ENCODE measurements at regions of chr20 and their contacts with region 1.

Region 1: GRCh38 chr20:34955232-34956040 is at the starts of genes GSS and MYH7B:
- DNase-seq: peak; percentile 96 to 98
- ATAC-seq: peak; percentile 96 to 97 (median 96)
- H3K4me3 ChIP-seq: peak within 1 kb of the TSS; percentile 68
- H3K4me3 Mint-ChIP-seq: peak within 1 kb of the TSS; percentile 100
- H3K27ac ChIP-seq: peak within 1 kb of the TSS; percentile 65
- H3K27ac Mint-ChIP-seq: peak within 1 kb of the TSS; percentile 94 to 98
- H3K4me1 ChIP-seq: peaks cover 12% of the 10 kb centered on the region
- H3K4me1 Mint-ChIP-seq: peaks cover 21 to 23% of the 10 kb centered on the region in 2 donors
- H3K27me3 ChIP-seq: no peaks in the 10 kb centered on the region
- H3K27me3 Mint-ChIP-seq: no peaks in the 10 kb centered on the region
- CTCF ChIP-seq: no peak
- total RNA-seq, gene GSS: 27.4 to 35.4 (median 30.3) TPM
- total RNA-seq, gene MYH7B: 0.18 to 1.0 (median 0.21) TPM

Region 2: GRCh38 chr20:34834459-34834893 is 121.0 kb before region 1 on chr20:
- intact Hi-C with region 1: loop called (anchors 1 kb)
- DNase-seq: peak in 1 of 2 donors; percentile 63
- ATAC-seq: peak in 1 of 3 donors; percentile 63
- H3K4me3 ChIP-seq: no peak overlapping the region
- H3K4me3 Mint-ChIP-seq: no peak overlapping the region
- H3K27ac ChIP-seq: no peak overlapping the region
- H3K27ac Mint-ChIP-seq: no peak overlapping the region
- H3K4me1 ChIP-seq: no peaks in the 10 kb centered on the region
- H3K4me1 Mint-ChIP-seq: peaks cover 0 to 6% of the 10 kb centered on the region in 2 donors
- H3K27me3 ChIP-seq: no peaks in the 10 kb centered on the region
- H3K27me3 Mint-ChIP-seq: peaks cover 21 to 25% of the 10 kb centered on the region in 2 donors
- CTCF ChIP-seq: peak; percentile 65

Region 3: GRCh38 chr20:34876162-34877001 is 79.1 kb before region 1 on chr20 and contains the start of gene ACSS2:
- intact Hi-C with region 1: loop called (anchors 1 kb)
- DNase-seq: peak; percentile 86 to 92
- ATAC-seq: peak; percentile 85 to 92 (median 85)
- H3K4me3 ChIP-seq: peak within 1 kb of the TSS; percentile 54
- H3K4me3 Mint-ChIP-seq: peak within 1 kb of the TSS; percentile 91
- H3K27ac ChIP-seq: peak within 1 kb of the TSS; percentile 54
- H3K27ac Mint-ChIP-seq: peak within 1 kb of the TSS; percentile 18 to 78
- H3K4me1 ChIP-seq: peaks cover 41% of the 10 kb centered on the region
- H3K4me1 Mint-ChIP-seq: peaks cover 34 to 51% of the 10 kb centered on the region in 2 donors
- H3K27me3 ChIP-seq: no peaks in the 10 kb centered on the region
- H3K27me3 Mint-ChIP-seq: peaks cover 8 to 22% of the 10 kb centered on the region in 2 donors
- CTCF ChIP-seq: no peak
- total RNA-seq, gene ACSS2: 2.4 to 11.4 (median 7.5) TPM

Region 4: GRCh38 chr20:34891166-34892062 is 64.0 kb before region 1 on chr20:
- intact Hi-C with region 1: no loop called
- DNase-seq: peak in 1 of 2 donors; percentile 34
- ATAC-seq: no peak
- H3K4me3 ChIP-seq: no peak overlapping the region
- H3K4me3 Mint-ChIP-seq: no peak overlapping the region
- H3K27ac ChIP-seq: no peak overlapping the region
- H3K27ac Mint-ChIP-seq: no peak overlapping the region
- H3K4me1 ChIP-seq: peaks cover 2% of the 10 kb centered on the region
- H3K4me1 Mint-ChIP-seq: no peaks in the 10 kb centered on the region
- H3K27me3 ChIP-seq: peaks cover 2% of the 10 kb centered on the region
- H3K27me3 Mint-ChIP-seq: peaks cover 7 to 12% of the 10 kb centered on the region in 2 donors
- CTCF ChIP-seq: no peak

Region 5: GRCh38 chr20:34915749-34916455 is 39.5 kb before region 1 on chr20:
- intact Hi-C with region 1: no loop called
- DNase-seq: no peak
- ATAC-seq: no peak
- H3K4me3 ChIP-seq: no peak overlapping the region
- H3K4me3 Mint-ChIP-seq: no peak overlapping the region
- H3K27ac ChIP-seq: no peak overlapping the region
- H3K27ac Mint-ChIP-seq: no peak overlapping the region
- H3K4me1 ChIP-seq: no peaks in the 10 kb centered on the region
- H3K4me1 Mint-ChIP-seq: peaks cover 8 to 12% of the 10 kb centered on the region in 2 donors
- H3K27me3 ChIP-seq: no peaks in the 10 kb centered on the region
- H3K27me3 Mint-ChIP-seq: no peaks in the 10 kb centered on the region
- CTCF ChIP-seq: no peak